H1 (cell line): ENCODE measurements at regions of chr17 and their contacts with region 1.

Region 1: DNA sequence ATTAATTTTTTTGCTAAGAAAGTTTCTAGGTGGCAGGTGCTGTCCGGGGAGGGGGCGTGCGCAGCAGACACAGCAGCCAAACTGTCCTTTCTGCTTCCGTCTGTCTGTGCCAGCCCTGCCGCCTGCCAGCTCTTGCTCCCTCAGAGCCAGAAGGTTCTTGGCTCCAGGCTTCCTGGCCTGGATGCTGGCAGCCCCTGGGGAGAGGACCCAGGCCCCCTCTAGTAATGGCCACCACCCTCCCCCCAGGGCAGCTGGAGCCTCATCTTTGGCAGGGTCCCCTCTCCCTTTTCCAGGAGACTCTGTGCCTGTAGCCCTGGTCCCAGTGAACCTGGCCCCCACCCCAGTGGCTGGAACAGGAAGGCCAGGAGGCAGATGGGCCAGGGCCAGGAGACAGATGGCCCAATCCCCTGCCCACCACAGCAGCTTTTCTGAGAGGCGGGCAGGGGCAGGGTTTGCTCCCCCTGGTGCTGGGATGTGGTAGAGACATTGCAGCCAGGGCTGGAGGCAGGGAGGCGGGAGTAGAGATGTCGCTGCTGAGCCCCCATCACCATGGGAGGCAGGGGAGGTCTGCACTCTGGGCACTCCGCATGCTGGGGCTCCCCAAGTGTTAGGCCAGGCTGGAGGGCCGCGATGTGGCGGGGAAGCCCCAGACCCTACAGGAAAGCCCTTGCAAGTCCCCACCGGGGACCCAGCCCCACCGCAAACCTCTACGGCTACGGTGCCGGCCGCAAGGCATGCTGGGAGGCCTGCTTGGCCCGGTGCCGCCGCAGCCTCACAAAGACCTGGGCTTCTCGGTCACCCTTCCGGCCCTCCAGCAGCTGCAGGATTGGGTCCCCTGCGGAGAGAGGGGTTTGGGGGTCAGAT is 16.7 kb downstream of the UNC13D start:
- DNase-seq: peak; percentile 44 to 96
- H3K4me3 ChIP-seq: peak overlapping the region in 3 of 4 experiments; percentile 27 to 53 (median 45); a peak in 6 of 8 replicates
- H3K27ac ChIP-seq: peak overlapping the region; percentile 43; the same call in 1 of the 2 replicates
- H3K4me1 ChIP-seq: peaks cover 0 to 28% (median 23%) of the 10 kb centered on the region in 4 experiments; a peak in 6 of 7 replicates
- H3K27me3 ChIP-seq: no peaks in the 10 kb centered on the region
- CTCF ChIP-seq: peak; percentile 92 to 97 (median 95)
- EP300 ChIP-seq: 0 out of 3 replicates have a peak, but pooled peaks of 1 of the 2 experiments have one; percentile 13
- POLR2A ChIP-seq: peak in 1 of 2 experiments; percentile 60; a peak in 2 of 3 replicates
- RAD21 ChIP-seq: peak; percentile 27 to 52; a peak in 3 of 4 replicates

Region 2: DNA sequence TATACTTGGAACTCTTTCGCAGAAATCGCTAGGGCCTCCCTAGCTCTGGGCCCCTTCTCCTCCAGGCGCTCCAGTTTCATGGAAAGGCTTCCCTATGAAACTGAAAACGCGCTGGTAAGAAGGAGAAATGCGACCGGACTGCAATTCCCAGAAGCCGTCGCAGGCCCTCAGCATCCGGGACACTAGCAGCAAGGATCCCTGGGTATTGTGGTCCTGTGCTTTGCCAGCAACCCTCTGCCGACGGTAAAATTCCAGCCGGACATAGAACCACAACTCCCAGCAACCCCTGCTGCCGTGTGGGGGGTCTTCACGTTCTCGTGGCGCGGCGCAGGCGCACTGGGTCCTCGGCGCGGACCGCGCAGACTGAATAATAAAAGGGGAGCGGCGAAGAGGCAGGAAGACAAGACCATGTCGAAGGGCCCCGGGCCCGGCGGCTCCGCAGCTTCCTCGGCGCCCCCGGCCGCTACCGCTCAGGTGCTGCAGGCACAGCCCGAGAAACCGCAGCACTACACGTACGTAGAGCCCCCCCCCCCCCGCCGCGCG is 42.9 kb before region 1 on chr17 and contains the start of gene UNK:
- CTCF ChIA-PET with region 1: interaction called, 14 read pairs
- POLR2A ChIA-PET with region 1: interaction called, 216 read pairs
- DNase-seq: peak; percentile 97 to 99
- H3K4me3 ChIP-seq: peak within 1 kb of the TSS; percentile 73 to 97 (median 92)
- H3K27ac ChIP-seq: peak within 1 kb of the TSS; percentile 100
- H3K4me1 ChIP-seq: peaks cover 0 to 20% (median 7%) of the 10 kb centered on the region in 4 experiments; a peak in 6 of 7 replicates
- H3K27me3 ChIP-seq: no peaks in the 10 kb centered on the region
- CTCF ChIP-seq: no peak
- EP300 ChIP-seq: no peak
- POLR2A ChIP-seq: peak in 1 of 2 experiments; percentile 89; a peak in 2 of 3 replicates
- RAD21 ChIP-seq: no peak
- total RNA-seq, gene UNK: 33.0 and 33.3 TPM in 2 replicates

Region 3: DNA sequence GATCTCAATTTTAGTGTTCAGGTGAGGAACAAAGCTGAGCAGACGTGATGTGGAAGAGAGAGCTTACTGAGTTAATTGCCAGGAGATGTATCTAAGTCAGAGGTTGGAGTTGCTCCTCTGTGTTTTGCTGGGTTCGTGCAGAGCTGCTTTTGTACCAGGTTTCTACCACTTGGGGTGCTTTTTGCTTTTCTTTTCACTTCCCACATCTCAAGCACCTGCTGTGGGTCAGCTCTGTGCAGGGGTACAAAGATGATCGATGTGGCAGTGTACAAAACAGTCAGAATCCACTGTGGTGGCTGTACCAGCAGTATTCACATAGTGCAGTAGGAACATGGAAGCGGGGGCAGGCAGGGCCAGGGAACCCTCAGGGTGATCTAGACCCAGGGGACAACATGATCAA is 28.1 kb before region 1 on chr17:
- CTCF ChIA-PET with region 1: interaction called, 18 read pairs
- POLR2A ChIA-PET with region 1: interaction called, 4 read pairs
- DNase-seq: no peak
- H3K4me3 ChIP-seq: no peak overlapping the region
- H3K27ac ChIP-seq: no peak overlapping the region
- H3K4me1 ChIP-seq: no peaks in the 10 kb centered on the region
- H3K27me3 ChIP-seq: no peaks in the 10 kb centered on the region
- CTCF ChIP-seq: no peak
- EP300 ChIP-seq: no peak
- POLR2A ChIP-seq: no peak
- RAD21 ChIP-seq: no peak

Region 4: DNA sequence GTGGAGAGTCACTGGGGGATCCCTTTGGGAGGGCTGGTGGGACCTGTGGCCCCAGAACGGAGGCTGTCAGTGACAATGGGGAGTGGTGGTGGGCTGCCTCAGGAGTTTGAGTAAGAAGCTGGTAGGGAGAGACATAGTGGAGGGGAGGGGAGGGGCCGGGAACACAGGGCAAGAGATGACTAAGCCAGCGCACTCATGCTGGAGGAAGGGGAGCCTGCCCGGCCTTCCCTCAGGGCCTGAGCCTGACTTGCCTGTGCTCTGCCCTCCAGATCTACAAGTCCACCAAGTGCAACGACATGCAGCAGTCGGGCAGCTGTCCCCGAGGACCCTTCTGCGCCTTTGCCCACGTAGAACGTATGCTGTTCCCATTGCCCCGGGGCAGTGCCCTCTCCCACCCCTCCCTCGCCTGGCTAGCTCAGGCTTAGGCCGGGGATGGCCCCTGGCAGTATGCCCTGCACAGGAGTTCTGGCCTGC is 12.5 kb before region 1 on chr17:
- CTCF ChIA-PET with region 1: interaction called, 104 read pairs
- POLR2A ChIA-PET with region 1: interaction called, 36 read pairs
- DNase-seq: no peak
- H3K4me3 ChIP-seq: no peak overlapping the region
- H3K27ac ChIP-seq: no peak overlapping the region
- H3K4me1 ChIP-seq: no peaks in the 10 kb centered on the region
- H3K27me3 ChIP-seq: no peaks in the 10 kb centered on the region
- CTCF ChIP-seq: no peak
- EP300 ChIP-seq: no peak
- POLR2A ChIP-seq: no peak
- RAD21 ChIP-seq: no peak

Region 5: DNA sequence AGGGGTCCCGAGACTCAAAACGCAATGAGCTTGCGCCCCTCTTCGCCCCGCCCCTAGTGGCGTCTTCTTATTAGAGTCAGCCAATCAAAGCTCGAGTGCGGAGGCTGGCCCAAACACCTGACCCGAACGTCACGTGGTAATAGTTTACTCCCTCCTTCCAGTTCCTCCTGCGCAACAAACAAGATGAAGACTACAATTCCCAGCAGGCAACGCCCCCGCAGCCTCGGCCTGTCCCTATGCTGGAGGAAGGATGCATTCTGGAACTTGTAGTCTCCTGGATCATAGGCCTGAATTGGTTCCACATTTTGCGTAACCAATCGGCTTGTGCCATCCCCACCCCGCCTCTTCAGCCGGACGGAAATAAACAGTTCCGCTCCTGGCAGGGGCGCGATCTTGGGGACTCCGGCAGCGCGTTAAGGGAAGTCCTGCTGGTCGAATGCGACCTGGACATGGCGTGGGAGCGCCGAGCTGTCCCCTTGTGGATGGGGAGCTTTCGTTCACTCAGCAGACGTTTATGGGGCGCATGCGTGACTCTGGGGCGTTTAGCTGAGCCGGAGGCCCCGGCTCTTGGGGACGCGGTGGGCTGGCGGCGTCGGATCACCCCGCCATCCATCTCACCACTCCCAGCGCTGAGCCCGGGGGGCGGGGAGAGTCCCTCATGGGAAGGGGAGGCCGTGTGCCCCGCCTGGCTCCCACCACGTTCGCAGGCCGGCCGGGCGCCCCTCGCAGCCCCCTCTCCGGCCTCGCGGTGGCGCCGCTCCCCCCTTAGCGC is 28.0 kb after region 1 on chr17 and contains the start of gene WBP2:
- CTCF ChIA-PET with region 1: interaction called, 563 read pairs
- POLR2A ChIA-PET with region 1: interaction called, 12 read pairs
- DNase-seq: peak; percentile 95 to 100
- H3K4me3 ChIP-seq: peak within 1 kb of the TSS; percentile 81 to 95 (median 91)
- H3K27ac ChIP-seq: peak within 1 kb of the TSS; percentile 93
- H3K4me1 ChIP-seq: peaks cover 0 to 7% (median 2%) of the 10 kb centered on the region in 4 experiments; a peak in 4 of 7 replicates
- H3K27me3 ChIP-seq: no peaks in the 10 kb centered on the region
- CTCF ChIP-seq: peak; percentile 47 to 61 (median 48)
- EP300 ChIP-seq: peak in 1 of 2 experiments; percentile 4; a peak in 1 of 3 replicates
- POLR2A ChIP-seq: peak; percentile 79 to 93
- RAD21 ChIP-seq: peak in 1 of 2 experiments; percentile 38; a peak in 1 of 4 replicates
- total RNA-seq, gene WBP2: 61.8 and 71.2 TPM in 2 replicates